ENCODE measurements at regions of chr17 and their contacts with region 1.

Region 1: DNA sequence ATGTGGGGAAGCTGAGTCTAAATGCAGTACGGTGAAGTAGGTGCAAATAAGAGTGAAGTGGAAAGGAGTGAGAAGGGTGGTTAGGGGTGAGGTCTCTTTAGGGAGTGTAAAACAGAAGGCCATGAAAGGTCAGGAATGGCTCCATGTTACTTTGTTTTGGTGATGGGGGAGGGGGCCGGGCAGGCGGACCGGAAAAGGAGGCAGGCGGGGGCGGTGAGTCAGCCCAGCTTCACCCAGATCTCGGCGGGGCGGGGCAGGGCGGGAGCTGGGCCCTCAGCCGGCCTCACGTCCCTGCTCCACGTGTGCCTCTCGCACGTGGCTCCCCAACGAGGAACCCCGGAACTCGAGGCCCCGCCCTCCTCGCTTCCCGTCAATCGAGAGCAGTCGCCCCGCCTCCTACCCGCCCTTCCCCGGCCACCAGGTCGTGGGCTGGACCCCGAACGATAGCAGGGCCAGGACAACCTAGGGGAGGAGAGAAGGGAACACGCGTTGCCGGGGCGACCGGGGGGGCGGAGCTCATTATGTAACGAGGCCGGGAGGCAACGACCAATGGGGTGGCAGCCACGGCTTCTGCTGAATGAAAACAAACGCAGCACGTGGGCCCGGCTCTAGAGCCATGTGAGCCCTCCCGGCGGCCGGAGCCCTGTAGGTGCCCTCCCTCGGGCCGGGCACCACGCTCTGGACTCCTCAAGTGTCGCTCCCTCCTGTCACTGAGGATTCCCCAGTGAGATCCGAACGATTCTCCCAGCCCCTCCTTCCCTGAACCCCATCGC is 1.4 kb downstream of the NR1D1 start:
- DNase-seq: peak; percentile 100
- ATAC-seq: peak; percentile 87 to 89
- H3K4me3 ChIP-seq: peak overlapping the region; percentile 81
- H3K27ac ChIP-seq: peak overlapping the region; percentile 100
- H3K4me1 ChIP-seq: peaks cover 44% of the 10 kb centered on the region
- H3K27me3 ChIP-seq: no peaks in the 10 kb centered on the region

Region 2: GRCh38 chr17:39903158-39903884 is 195.7 kb before region 1 on chr17:
- intact Hi-C with region 1: no loop called
- DNase-seq: no peak
- ATAC-seq: no peak
- H3K4me3 ChIP-seq: no peak overlapping the region
- H3K27ac ChIP-seq: no peak overlapping the region
- H3K4me1 ChIP-seq: no peaks in the 10 kb centered on the region
- H3K27me3 ChIP-seq: no peaks in the 10 kb centered on the region

Region 3: GRCh38 chr17:40038882-40039513 is 60.0 kb before region 1 on chr17:
- intact Hi-C with region 1: no loop called
- DNase-seq: peak; percentile 77 to 88 (median 86)
- ATAC-seq: peak; percentile 92 to 96
- H3K4me3 ChIP-seq: no peak overlapping the region
- H3K27ac ChIP-seq: peak overlapping the region; percentile 87
- H3K4me1 ChIP-seq: peaks cover 3% of the 10 kb centered on the region
- H3K27me3 ChIP-seq: no peaks in the 10 kb centered on the region

Region 4: GRCh38 chr17:40062329-40063186 is 36.5 kb before region 1 on chr17 and contains the start of gene THRA:
- intact Hi-C with region 1: loop called in 1 of 4 experiments (anchors 5 kb)
- DNase-seq: peak; percentile 73 to 93 (median 92)
- ATAC-seq: peak; percentile 63 to 75
- H3K4me3 ChIP-seq: peak within 1 kb of the TSS; percentile 84
- H3K27ac ChIP-seq: peak within 1 kb of the TSS; percentile 97
- H3K4me1 ChIP-seq: peaks cover 9% of the 10 kb centered on the region
- H3K27me3 ChIP-seq: no peaks in the 10 kb centered on the region
- total RNA-seq, gene THRA: 80.6 to 99.5 (median 95.9) TPM

Region 5: DNA sequence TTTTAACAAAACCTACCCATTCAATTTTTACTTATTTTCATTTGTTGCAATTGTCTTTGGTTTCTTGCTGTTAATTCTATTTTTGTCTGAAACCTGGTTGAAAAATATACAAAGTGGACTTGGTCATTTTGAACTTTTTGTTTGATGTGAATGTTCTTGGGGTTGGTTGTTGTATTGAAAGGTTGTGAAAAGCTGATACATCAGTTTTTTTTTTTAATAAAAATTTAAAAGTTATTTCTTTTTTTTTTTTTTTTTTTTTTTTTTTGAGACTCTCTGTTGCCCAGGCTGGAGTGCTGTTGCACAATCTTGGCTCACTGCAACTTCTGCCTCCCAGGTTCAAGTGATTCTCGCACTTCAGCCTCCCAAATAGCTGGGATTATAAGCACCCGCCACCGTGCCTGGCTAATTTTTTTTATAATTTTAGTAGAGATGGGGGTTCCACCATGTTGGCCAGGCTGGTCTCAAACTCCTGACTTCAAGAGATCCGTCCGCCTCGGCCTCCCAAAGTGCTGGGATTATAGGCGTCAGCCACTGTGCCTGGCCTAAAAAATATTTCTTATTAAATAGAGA is 149.0 kb after region 1 on chr17:
- intact Hi-C with region 1: no loop called
- DNase-seq: peak in 2 of 3 donors; percentile 44 to 61
- ATAC-seq: no peak
- H3K4me3 ChIP-seq: no peak overlapping the region
- H3K27ac ChIP-seq: no peak overlapping the region
- H3K4me1 ChIP-seq: peaks cover 1% of the 10 kb centered on the region
- H3K27me3 ChIP-seq: no peaks in the 10 kb centered on the region

Measured in right cardiac atrium (tissue), 5 donors.